Transverse colon (tissue), 4 donors: ENCODE measurements at regions of chr5 and their contacts with region 1.

Region 1: GRCh38 chr5:172849606-172850453 is 15.8 kb downstream of the ERGIC1 start:
- DNase-seq: peak; percentile 77
- H3K4me3 ChIP-seq: no peak overlapping the region
- H3K27ac ChIP-seq: peak overlapping the region; percentile 59 to 83 (median 73)
- H3K4me1 ChIP-seq: peaks cover 25 to 85% (median 67%) of the 10 kb centered on the region in 4 donors
- H3K27me3 ChIP-seq: no peaks in the 10 kb centered on the region
- CTCF ChIP-seq: no peak
- EP300 ChIP-seq: peak; percentile 42
- POLR2A ChIP-seq: no peak

Region 2: GRCh38 chr5:172721301-172722130 is 128.3 kb before region 1 on chr5:
- in situ Hi-C with region 1: no loop called
- intact Hi-C with region 1: no loop called
- DNase-seq: no peak
- H3K4me3 ChIP-seq: no peak overlapping the region
- H3K27ac ChIP-seq: peak overlapping the region in 1 of 4 donors; percentile 44
- H3K4me1 ChIP-seq: peaks cover 6 to 16% (median 9%) of the 10 kb centered on the region in 4 donors
- H3K27me3 ChIP-seq: no peaks in the 10 kb centered on the region
- CTCF ChIP-seq: no peak
- EP300 ChIP-seq: peak; percentile 56
- POLR2A ChIP-seq: no peak

Region 3: GRCh38 chr5:172770675-172771438 is 79.0 kb before region 1 on chr5 and contains the start of gene DUSP1:
- in situ Hi-C with region 1: loop called in 1 of 4 experiments (anchors 10 kb)
- intact Hi-C with region 1: no loop called
- DNase-seq: peak; percentile 99
- H3K4me3 ChIP-seq: peak within 1 kb of the TSS; percentile 81 to 98 (median 82)
- H3K27ac ChIP-seq: peak within 1 kb of the TSS; percentile 99 to 100 (median 100)
- H3K4me1 ChIP-seq: peaks cover 24 to 75% (median 54%) of the 10 kb centered on the region in 4 donors
- H3K27me3 ChIP-seq: no peaks in the 10 kb centered on the region
- CTCF ChIP-seq: peak; percentile 32 to 80 (median 56)
- EP300 ChIP-seq: peak; percentile 59
- POLR2A ChIP-seq: peak; percentile 100
- total RNA-seq, gene DUSP1: 469 to 701 (median 567) TPM

Region 4: DNA sequence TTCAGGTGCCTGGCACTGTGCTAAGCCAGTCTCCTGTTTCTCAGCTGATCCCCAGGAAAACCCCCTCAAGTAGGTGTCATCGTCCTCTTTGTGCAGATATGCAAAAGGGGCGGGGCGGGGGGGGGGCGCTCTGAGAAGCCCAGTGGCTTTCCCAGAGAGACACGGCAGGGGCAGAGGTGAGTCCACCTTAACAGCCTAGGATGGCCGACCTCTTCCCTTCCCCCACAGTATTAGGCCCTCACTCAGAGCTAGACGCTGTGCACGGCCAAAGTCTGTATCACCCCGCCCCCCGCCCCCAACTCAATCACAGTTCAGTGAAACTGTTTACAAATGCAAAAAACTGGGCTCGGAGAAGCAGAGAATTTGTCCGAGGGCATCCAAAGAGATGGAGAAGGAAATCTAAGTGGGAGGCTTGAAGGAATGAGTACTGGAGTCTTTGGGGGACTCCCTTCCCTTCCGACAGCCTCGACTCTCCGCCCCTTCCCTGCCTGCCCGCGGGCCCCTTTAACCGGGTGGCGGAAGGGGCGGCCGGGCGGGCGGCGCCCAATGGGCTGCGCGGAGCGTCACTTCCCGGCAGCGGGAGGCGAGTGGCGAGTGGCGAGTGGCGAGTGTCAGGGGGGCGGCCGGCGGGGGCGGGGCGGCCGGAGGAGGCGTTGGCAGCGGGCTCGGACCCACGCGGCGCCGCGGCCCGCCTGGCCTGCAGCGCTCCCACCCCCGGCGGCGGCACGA is 16.0 kb before region 1 on chr5 and contains the start of gene ERGIC1:
- in situ Hi-C with region 1: no loop called
- intact Hi-C with region 1: no loop called
- DNase-seq: peak; percentile 91
- H3K4me3 ChIP-seq: peak within 1 kb of the TSS; percentile 64 to 96 (median 76)
- H3K27ac ChIP-seq: peak within 1 kb of the TSS; percentile 89 to 94 (median 92)
- H3K4me1 ChIP-seq: peaks cover 34 to 47% (median 40%) of the 10 kb centered on the region in 4 donors
- H3K27me3 ChIP-seq: no peaks in the 10 kb centered on the region
- CTCF ChIP-seq: no peak
- EP300 ChIP-seq: no peak
- POLR2A ChIP-seq: peak; percentile 69
- total RNA-seq, gene ERGIC1: 125 to 252 (median 184) TPM

Region 5: DNA sequence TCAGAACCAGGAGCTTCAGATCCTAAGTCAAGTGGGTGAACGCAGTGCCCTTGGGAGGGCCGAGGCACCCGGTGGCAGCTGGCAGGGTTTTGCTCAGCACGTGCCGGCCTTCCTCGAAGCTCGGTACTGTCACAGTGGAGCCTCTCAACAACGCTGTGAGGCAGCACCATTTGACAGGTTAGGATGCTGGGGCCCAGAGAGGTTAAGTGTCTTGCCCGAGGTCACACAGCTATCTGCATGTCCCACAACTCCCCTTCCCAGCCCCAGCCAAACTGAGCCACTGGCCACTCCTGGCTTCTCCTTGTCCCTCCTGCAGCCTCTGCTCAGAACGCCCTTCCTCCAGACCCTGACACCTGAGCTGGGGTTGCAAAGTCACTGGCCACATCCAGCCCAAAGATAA is 65.7 kb after region 1 on chr5:
- in situ Hi-C with region 1: no loop called
- intact Hi-C with region 1: no loop called
- DNase-seq: no peak
- H3K4me3 ChIP-seq: no peak overlapping the region
- H3K27ac ChIP-seq: no peak overlapping the region
- H3K4me1 ChIP-seq: peaks cover 0 to 8% (median 4%) of the 10 kb centered on the region in 4 donors
- H3K27me3 ChIP-seq: no peaks in the 10 kb centered on the region
- CTCF ChIP-seq: no peak
- EP300 ChIP-seq: no peak
- POLR2A ChIP-seq: no peak